ENCODE measurements at regions of chr22 and their contacts with region 1.

Region 1: GRCh38 chr22:25076336-25076735 is 123.3 kb upstream of the CRYBB3 start:
- DNase-seq: no peak
- H3K4me3 ChIP-seq: no peak overlapping the region
- H3K27ac ChIP-seq: no peak overlapping the region
- H3K4me1 ChIP-seq: no peaks in the 10 kb centered on the region
- H3K27me3 ChIP-seq: no peaks in the 10 kb centered on the region
- CTCF ChIP-seq: no peak

Region 2: GRCh38 chr22:24905909-24906308 is 170.4 kb before region 1 on chr22:
- CTCF ChIA-PET with region 1: no interaction called
- POLR2A ChIA-PET with region 1: interaction called, 16 read pairs
- intact Hi-C with region 1: no loop called
- DNase-seq: no peak
- H3K4me3 ChIP-seq: no peak overlapping the region
- H3K27ac ChIP-seq: no peak overlapping the region
- H3K4me1 ChIP-seq: no peaks in the 10 kb centered on the region
- H3K27me3 ChIP-seq: peaks cover 4% of the 10 kb centered on the region; the same call in 1 of the 2 replicates
- CTCF ChIP-seq: no peak

Region 3: DNA sequence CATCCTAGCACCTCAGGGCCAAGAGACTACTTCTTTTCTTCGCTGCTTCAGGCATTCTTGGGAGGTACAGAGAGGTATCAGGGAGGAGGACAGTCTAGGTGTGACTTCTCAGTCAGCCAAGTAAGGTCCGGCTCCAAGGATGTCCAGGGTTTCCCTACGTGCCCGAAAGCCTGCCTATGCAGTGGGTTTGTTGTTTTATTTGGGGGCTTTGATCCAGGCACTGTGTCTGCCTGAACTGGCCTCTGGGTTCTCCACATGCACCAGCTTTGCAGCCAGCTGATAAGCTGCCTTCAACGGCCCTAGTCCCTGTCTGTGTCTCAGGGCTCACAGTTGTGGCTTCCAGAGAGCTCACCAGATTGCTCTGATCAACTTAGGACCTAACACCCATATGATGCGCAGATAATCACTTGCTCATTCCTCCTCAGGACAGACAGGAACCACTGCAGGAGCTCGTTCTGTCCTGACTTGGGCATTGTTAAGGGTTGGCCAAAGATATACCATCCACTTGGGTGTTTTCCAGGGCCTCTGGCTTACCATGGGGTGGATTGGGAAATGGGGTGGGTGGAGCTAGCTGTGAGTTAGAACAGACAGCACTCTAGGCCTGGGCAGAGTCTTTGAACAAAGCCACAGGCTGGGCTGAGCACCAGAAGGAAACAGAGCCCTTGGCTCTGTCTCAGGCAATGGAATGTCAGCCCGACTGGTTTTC is 77.8 kb after region 1 on chr22:
- CTCF ChIA-PET with region 1: no interaction called
- POLR2A ChIA-PET with region 1: no interaction called
- intact Hi-C with region 1: no loop called
- DNase-seq: peak; percentile 83 to 90
- H3K4me3 ChIP-seq: no peak overlapping the region
- H3K27ac ChIP-seq: peak overlapping the region; percentile 31
- H3K4me1 ChIP-seq: peaks cover 25% of the 10 kb centered on the region
- H3K27me3 ChIP-seq: no peaks in the 10 kb centered on the region
- CTCF ChIP-seq: no peak

Region 4: DNA sequence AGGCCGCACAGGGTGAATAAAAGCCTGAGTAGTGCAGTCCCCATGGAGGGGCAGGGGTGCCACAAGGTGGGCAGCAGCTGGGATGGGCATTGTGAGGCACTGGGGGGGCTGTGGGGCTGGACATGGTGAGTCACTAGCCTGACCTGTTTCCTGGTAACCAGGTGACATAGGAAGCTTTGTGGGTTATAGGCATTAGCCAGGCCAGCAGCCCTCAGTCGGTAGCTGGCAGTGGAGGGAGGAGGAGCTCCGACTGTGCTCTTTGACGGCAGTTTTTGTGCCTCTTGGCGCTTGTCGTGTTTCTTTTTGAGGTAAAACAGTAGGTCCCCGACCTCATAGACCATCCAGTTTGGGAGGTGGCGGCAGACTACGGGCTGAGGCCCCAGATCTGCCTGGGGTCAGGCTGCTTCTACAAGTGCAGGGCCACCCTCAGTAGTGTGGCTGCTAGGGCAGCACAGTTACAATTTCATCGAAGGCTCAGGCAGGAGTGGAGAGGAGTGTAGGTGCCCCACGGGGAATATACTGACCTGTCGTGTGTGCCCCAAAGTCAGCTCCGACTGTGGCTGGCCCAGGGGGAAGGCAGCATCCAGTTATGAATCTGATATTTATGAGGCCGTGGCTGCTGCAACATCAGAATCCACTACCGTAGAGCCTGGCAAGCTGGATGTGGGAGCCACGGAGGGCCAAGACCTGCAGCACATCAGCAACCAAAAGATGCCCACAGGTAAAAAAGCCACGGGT is 250.9 kb after region 1 on chr22:
- CTCF ChIA-PET with region 1: no interaction called
- POLR2A ChIA-PET with region 1: no interaction called
- intact Hi-C with region 1: no loop called
- DNase-seq: no peak
- H3K4me3 ChIP-seq: no peak overlapping the region
- H3K27ac ChIP-seq: no peak overlapping the region
- H3K4me1 ChIP-seq: no peaks in the 10 kb centered on the region
- H3K27me3 ChIP-seq: no peaks in the 10 kb centered on the region
- CTCF ChIP-seq: no peak

Measured in PC-9 (cell line).